Activated naive CD4-positive, alpha-beta T cell treated with anti-CD3 and anti-CD28 coated beads, Interleukin-2, amount 10 ng/mL, durations not matched to agents 7 days and 5 days (primary cell): ENCODE measurements at regions of chr6 and their contacts with region 1.

Region 1: GRCh38 chr6:136792410-136793262 is at the start of gene MAP3K5:
- DNase-seq: peak; percentile 95
- H3K4me3 Mint-ChIP-seq: peak within 1 kb of the TSS; percentile 90
- H3K27ac Mint-ChIP-seq: peak within 1 kb of the TSS; percentile 96
- H3K4me1 Mint-ChIP-seq: peaks cover 34% of the 10 kb centered on the region
- H3K27me3 Mint-ChIP-seq: peaks cover 3% of the 10 kb centered on the region

Region 2: DNA sequence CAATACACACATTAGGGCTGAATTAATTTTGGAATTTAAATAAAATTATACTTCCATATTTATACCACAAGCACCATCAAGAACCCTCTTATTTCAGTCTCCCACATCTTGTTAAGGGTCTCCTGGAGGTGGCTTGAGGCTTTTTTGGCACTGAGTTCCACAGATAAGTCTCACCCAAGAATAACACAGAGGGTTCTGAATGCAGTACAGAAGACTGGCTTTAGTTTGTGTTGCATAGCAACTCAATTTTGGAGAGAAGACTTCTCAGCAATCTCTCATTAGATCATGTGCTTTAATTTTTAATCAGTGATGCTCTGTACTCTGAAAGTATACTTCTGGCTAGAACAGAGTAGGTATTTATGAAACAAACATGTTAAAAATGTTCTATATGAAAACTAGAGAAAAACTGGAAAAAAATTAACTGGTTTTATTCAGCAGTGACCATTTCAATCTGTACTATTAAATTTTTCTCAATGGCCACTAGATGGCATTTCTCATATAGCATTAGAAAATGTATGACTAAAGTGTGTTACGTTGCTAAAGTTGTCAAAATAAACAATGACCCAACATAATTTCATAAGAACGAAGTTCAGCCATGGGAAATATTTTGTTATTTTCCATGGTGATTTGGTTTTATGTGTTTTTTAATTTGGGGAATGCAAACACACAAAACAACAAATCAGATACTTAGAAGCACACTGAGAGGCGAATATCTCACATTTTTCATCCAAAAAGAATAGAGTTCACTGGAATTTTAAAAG is 209.7 kb before region 1 on chr6:
- CTCF ChIA-PET with region 1: interaction called, 11 read pairs
- DNase-seq: no peak
- H3K4me3 Mint-ChIP-seq: no peak overlapping the region
- H3K27ac Mint-ChIP-seq: no peak overlapping the region
- H3K4me1 Mint-ChIP-seq: no peaks in the 10 kb centered on the region
- H3K27me3 Mint-ChIP-seq: no peaks in the 10 kb centered on the region

Region 3: DNA sequence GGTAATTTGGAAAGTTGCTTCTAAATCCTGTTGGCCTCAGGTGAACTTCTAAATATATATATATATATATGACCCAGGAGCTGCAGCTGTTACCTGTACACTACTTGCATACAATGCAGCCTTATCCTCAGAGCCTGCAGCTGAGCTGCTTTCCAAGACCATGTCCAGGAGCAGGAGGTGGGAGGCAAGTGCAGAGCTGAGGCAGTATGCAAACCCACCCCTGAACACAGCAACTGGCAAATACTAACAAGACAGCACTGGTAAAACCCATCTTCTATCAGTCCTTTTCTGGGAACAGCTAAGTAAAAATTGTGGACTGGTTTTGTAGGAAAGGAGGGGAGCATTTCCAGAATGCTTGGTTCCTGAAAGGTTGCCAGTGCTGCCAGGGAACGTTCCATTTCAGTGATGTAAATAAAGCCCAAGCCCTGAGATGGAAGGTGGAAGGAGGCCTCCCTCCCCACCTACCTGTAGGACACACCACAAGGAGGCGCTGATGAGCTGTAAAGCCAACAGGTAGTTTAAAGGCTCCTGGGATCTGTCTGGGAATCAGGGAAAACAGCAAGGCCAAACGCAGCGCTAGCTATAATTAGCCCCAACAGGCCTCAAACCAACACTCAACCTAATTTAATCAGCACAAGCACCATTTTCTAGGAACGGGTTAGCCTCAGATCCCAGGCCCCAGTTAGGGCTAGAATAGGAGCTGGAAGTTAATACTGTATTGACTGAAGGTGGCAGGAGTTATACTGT is 148.6 kb before region 1 on chr6:
- CTCF ChIA-PET with region 1: interaction called, 426 read pairs
- DNase-seq: peak; percentile 88
- H3K4me3 Mint-ChIP-seq: no peak overlapping the region
- H3K27ac Mint-ChIP-seq: no peak overlapping the region
- H3K4me1 Mint-ChIP-seq: peaks cover 7% of the 10 kb centered on the region
- H3K27me3 Mint-ChIP-seq: no peaks in the 10 kb centered on the region

Region 4: DNA sequence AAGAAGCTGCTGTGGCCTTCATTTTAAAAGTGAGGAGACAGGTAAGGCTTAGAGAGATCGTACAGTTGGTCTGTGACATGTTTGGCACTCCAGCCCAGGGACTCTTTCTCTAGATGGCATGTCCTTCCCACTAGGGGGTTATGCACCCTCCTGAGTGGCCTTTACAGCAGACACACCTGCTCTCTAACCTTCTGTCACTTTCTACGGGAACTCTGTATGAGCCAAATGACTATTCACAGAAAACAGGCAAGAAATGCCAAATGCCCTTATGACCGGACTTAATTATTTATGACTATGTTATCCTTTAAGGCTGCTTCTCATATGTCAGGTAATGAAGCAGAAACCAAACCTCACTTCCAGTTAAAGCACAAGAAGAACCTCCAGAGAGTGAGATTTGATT is 91.6 kb before region 1 on chr6:
- CTCF ChIA-PET with region 1: interaction called, 18 read pairs
- DNase-seq: no peak
- H3K4me3 Mint-ChIP-seq: no peak overlapping the region
- H3K27ac Mint-ChIP-seq: no peak overlapping the region
- H3K4me1 Mint-ChIP-seq: peaks cover 37% of the 10 kb centered on the region
- H3K27me3 Mint-ChIP-seq: no peaks in the 10 kb centered on the region

Region 5: GRCh38 chr6:136737871-136738691 is 54.6 kb before region 1 on chr6:
- CTCF ChIA-PET with region 1: interaction called, 24 read pairs
- DNase-seq: no peak
- H3K4me3 Mint-ChIP-seq: no peak overlapping the region
- H3K27ac Mint-ChIP-seq: no peak overlapping the region
- H3K4me1 Mint-ChIP-seq: peaks cover 30% of the 10 kb centered on the region
- H3K27me3 Mint-ChIP-seq: no peaks in the 10 kb centered on the region

Region 6: GRCh38 chr6:136761227-136761922 is 31.3 kb before region 1 on chr6:
- CTCF ChIA-PET with region 1: interaction called, 60 read pairs
- DNase-seq: peak; percentile 28
- H3K4me3 Mint-ChIP-seq: peak overlapping the region; percentile 46
- H3K27ac Mint-ChIP-seq: peak overlapping the region; percentile 68
- H3K4me1 Mint-ChIP-seq: peaks cover 75% of the 10 kb centered on the region
- H3K27me3 Mint-ChIP-seq: no peaks in the 10 kb centered on the region

Region 7: GRCh38 chr6:136840276-136841001 is 47.8 kb after region 1 on chr6:
- CTCF ChIA-PET with region 1: no interaction called
- DNase-seq: no peak
- H3K4me3 Mint-ChIP-seq: no peak overlapping the region
- H3K27ac Mint-ChIP-seq: no peak overlapping the region
- H3K4me1 Mint-ChIP-seq: no peaks in the 10 kb centered on the region
- H3K27me3 Mint-ChIP-seq: no peaks in the 10 kb centered on the region

Region 8: GRCh38 chr6:136886130-136886529 is 93.5 kb after region 1 on chr6:
- CTCF ChIA-PET with region 1: no interaction called
- DNase-seq: no peak
- H3K4me3 Mint-ChIP-seq: no peak overlapping the region
- H3K27ac Mint-ChIP-seq: no peak overlapping the region
- H3K4me1 Mint-ChIP-seq: no peaks in the 10 kb centered on the region
- H3K27me3 Mint-ChIP-seq: no peaks in the 10 kb centered on the region

Region 9: GRCh38 chr6:137849181-137849980 is 1056.7 kb after region 1 on chr6:
- CTCF ChIA-PET with region 1: no interaction called
- DNase-seq: no peak
- H3K4me3 Mint-ChIP-seq: no peak overlapping the region
- H3K27ac Mint-ChIP-seq: no peak overlapping the region
- H3K4me1 Mint-ChIP-seq: no peaks in the 10 kb centered on the region
- H3K27me3 Mint-ChIP-seq: no peaks in the 10 kb centered on the region